ENCODE measurements at regions of chr1 and their contacts with region 1.

Region 1: DNA sequence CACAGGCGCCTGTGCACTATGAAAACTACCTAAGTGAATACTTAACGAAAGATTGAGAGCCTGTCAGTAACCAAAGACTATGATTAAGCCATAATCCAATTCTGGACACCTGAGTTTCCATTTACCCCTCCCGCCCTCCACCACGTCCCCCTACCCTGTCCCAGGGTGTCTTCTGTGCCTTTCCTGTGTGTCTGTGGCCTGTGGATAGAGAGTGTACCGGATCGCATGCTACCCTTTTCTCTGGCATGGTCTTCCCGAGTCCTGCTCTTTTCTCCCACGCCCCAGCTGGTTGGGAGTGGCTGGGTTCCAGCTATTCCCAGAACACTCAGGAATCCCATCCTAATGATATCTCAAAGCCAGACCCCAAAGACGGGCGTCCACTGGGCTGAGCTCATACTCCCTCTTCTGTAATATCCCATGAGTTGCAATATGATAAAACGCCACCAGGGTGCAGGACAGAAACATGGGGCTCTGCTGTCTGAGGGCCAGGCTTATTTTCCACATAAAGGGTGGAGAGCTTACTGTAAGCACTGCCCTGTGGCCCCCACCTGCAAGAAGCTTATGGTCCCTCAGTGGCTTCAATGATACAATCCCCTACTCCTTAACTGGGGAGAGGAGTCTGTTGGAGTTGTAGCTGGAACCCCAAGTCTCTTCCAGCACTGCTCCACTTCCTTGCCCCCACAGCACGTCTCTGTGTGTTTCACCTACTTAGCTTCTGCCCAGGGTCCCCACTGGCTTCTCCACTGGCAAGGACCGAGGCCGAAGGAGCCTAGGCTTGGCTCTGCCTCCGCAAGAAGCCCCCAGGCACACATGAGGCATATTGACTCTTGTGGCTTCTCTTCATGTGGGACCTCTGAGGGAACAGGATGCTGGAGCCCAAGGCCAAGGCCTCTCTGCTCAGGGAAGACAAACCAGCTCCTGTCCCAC is 17.6 kb upstream of the ALX3 start:
- DNase-seq: peak; percentile 68
- ATAC-seq: peak; percentile 78
- H3K4me3 Mint-ChIP-seq: no peak overlapping the region
- H3K27ac Mint-ChIP-seq: no peak overlapping the region
- H3K4me1 Mint-ChIP-seq: peaks cover 11% of the 10 kb centered on the region
- H3K27me3 Mint-ChIP-seq: peaks cover 61% of the 10 kb centered on the region

Region 2: DNA sequence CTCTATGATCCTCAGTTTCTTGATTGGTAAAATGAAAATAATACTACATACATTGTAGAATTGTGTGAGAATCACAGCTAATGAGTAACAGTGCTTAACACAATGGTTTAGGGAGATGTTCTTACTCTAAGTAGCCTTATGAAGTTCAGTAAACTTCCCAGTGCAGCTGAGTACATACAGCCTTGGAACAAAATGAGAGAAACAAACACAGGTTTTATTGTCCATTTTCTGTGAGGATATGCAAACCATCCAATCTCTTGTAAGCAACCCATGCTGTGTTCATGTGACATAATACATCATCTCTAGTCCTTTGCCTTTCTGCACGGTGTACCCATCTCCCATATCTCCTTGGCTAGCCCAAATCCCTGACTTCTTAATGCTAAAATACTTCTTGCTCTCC is 68.3 kb before region 1 on chr1:
- CTCF ChIA-PET with region 1: no interaction called
- POLR2A ChIA-PET with region 1: no interaction called
- DNase-seq: no peak
- ATAC-seq: no peak
- H3K4me3 Mint-ChIP-seq: no peak overlapping the region
- H3K27ac Mint-ChIP-seq: no peak overlapping the region
- H3K4me1 Mint-ChIP-seq: no peaks in the 10 kb centered on the region
- H3K27me3 Mint-ChIP-seq: no peaks in the 10 kb centered on the region

Region 3: DNA sequence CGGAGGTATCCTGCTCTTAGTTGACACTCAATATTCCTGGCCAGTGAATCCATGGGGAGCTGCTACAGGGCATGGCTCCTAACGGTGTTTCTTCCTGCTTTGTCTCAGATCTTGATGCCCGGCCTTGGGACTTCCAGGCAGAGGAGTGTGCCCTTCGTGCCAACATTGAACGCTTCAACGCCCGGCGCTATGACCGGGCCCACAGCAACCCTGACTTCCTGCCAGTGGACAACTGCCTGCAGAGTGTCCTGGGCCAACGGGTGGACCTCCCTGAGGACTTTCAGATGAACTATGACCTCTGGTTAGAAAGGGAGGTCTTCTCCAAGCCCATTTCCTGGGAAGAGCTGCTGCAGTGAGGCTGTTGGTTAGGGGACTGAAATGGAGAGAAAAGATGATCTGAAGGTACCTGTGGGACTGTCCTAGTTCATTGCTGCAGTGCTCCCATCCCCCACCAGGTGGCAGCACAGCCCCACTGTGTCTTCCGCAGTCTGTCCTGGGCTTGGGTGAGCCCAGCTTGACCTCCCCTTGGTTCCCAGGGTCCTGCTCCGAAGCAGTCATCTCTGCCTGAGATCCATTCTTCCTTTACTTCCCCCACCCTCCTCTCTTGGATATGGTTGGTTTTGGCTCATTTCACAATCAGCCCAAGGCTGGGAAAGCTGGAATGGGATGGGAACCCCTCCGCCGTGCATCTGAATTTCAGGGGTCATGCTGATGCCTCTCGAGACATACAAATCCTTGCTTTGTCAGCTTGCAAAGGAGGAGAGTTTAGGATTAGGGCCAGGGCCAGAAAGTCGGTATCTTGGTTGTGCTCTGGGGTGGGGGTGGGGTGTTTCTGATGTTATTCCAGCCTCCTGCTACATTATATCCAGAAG is 34.3 kb before region 1 on chr1:
- CTCF ChIA-PET with region 1: interaction called, 17 read pairs
- POLR2A ChIA-PET with region 1: no interaction called
- DNase-seq: peak; percentile 74
- ATAC-seq: peak; percentile 74
- H3K4me3 Mint-ChIP-seq: no peak overlapping the region
- H3K27ac Mint-ChIP-seq: no peak overlapping the region
- H3K4me1 Mint-ChIP-seq: no peaks in the 10 kb centered on the region
- H3K27me3 Mint-ChIP-seq: no peaks in the 10 kb centered on the region

Region 4: DNA sequence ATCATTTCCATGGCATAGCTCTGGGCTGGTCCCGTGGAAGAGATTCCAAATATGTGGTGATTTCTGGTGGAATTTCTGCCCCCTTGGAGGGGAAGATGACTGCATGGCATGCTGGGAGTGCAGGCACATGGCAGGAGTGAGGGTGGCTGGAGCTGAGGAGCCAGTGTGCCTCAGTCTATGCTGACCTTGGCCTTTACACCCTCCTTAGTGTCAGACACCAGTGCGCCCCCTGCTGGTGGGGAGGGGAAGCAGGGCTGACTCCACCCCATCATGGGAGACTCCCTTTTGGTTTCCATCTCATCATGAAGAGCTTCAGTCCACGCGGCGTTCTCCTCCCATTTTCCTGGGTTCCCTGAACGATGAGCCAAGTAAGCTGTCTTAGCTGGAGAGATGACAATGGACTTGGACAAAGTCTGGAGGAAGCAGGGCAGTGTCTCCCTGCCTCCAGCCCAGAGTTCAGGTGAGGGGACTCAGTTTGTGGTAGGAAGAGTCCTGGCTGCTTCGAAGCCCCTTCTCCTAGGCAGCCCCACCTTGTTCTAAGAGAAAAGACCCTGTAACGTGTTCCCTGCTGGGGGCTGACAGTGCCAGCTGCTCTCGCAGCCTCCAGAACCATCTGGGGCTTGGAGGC is 27.9 kb before region 1 on chr1:
- CTCF ChIA-PET with region 1: interaction called, 11 read pairs
- POLR2A ChIA-PET with region 1: no interaction called
- DNase-seq: peak; percentile 80
- ATAC-seq: peak; percentile 74
- H3K4me3 Mint-ChIP-seq: no peak overlapping the region
- H3K27ac Mint-ChIP-seq: no peak overlapping the region
- H3K4me1 Mint-ChIP-seq: peaks cover 7% of the 10 kb centered on the region
- H3K27me3 Mint-ChIP-seq: peaks cover 2% of the 10 kb centered on the region

Region 5: DNA sequence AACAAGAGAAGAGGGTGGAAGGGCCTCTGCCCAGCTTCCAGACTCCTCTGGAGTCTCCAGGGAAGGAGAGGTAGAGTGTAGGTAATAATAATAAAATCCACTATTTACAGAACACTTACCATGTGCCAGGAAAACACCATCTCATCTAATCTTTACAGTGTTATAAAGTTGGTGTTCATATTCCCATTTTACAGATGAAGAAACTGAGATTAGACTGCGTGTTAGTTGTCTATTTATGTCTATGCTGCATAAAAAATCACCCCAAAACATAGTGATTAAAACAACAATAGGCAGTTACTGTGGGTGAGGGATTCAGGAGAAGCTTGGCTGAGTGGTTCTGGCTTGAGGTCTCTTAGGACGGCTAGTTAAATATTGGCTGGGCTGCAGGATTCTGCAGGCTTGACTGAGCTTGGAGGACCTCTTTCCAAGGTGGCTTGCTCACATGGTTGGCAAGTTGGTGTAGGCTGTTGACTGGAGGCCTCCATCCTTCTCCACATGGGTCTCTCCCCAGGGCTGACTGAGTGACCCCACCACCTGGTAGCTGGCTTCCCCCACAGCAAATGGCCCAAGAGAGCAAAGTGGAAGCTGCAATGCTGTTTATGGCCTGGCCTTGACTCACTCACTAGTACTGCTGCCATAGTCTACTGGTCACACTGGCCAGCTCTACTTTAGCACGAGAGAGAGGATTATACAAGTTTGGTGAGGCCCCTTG is 11.1 kb before region 1 on chr1:
- CTCF ChIA-PET with region 1: interaction called, 11 read pairs
- POLR2A ChIA-PET with region 1: interaction called, 3 read pairs
- DNase-seq: no peak
- ATAC-seq: no peak
- H3K4me3 Mint-ChIP-seq: no peak overlapping the region
- H3K27ac Mint-ChIP-seq: no peak overlapping the region
- H3K4me1 Mint-ChIP-seq: no peaks in the 10 kb centered on the region
- H3K27me3 Mint-ChIP-seq: peaks cover 49% of the 10 kb centered on the region

Region 6: GRCh38 chr1:110106013-110106941 is 18.2 kb after region 1 on chr1:
- CTCF ChIA-PET with region 1: interaction called, 63 read pairs
- POLR2A ChIA-PET with region 1: no interaction called
- DNase-seq: peak; percentile 70
- ATAC-seq: peak; percentile 77
- H3K4me3 Mint-ChIP-seq: no peak overlapping the region
- H3K27ac Mint-ChIP-seq: no peak overlapping the region
- H3K4me1 Mint-ChIP-seq: no peaks in the 10 kb centered on the region
- H3K27me3 Mint-ChIP-seq: peaks cover 8% of the 10 kb centered on the region

Region 7: GRCh38 chr1:110118636-110119615 is 30.9 kb after region 1 on chr1:
- CTCF ChIA-PET with region 1: interaction called, 12 read pairs
- POLR2A ChIA-PET with region 1: no interaction called
- DNase-seq: no peak
- ATAC-seq: no peak
- H3K4me3 Mint-ChIP-seq: no peak overlapping the region
- H3K27ac Mint-ChIP-seq: no peak overlapping the region
- H3K4me1 Mint-ChIP-seq: no peaks in the 10 kb centered on the region
- H3K27me3 Mint-ChIP-seq: peaks cover 19% of the 10 kb centered on the region

Region 8: DNA sequence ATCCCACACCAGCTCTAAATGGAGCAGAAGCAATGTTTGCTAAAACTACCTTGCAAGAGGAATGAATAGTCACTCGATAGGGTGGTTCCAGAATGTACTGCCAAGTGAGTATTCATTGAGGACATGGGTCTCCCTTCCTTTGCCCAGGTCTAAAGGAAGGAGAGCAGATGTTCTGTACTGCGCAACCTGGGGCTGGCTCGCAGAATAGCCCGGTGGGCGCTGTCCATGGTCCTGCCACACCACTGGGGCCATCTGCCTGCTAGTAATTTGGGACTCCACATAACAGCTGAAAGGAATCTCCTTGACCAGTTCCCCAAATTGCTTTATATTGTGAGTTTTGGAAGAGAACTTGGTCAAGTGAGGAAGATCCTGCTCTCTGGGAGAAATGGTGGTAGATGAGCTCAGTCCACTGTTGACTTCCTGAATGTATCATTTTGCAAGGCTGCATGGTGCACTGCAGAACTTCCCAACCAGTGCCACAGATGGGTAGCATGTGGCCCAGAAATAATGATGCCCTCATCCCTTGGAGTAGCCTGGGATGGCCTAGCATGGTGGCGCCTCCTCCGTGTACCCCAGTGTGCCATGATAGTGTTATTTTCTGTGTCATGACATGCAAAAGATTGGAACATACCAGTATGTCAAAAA is 67.9 kb after region 1 on chr1:
- CTCF ChIA-PET with region 1: no interaction called
- POLR2A ChIA-PET with region 1: no interaction called
- DNase-seq: peak; percentile 70
- ATAC-seq: peak; percentile 71
- H3K4me3 Mint-ChIP-seq: no peak overlapping the region
- H3K27ac Mint-ChIP-seq: no peak overlapping the region
- H3K4me1 Mint-ChIP-seq: peaks cover 9% of the 10 kb centered on the region
- H3K27me3 Mint-ChIP-seq: peaks cover 36% of the 10 kb centered on the region